Astrocyte of the cerebellum (primary cell): ENCODE measurements at regions of chrX and their contacts with region 1.

Region 1: DNA sequence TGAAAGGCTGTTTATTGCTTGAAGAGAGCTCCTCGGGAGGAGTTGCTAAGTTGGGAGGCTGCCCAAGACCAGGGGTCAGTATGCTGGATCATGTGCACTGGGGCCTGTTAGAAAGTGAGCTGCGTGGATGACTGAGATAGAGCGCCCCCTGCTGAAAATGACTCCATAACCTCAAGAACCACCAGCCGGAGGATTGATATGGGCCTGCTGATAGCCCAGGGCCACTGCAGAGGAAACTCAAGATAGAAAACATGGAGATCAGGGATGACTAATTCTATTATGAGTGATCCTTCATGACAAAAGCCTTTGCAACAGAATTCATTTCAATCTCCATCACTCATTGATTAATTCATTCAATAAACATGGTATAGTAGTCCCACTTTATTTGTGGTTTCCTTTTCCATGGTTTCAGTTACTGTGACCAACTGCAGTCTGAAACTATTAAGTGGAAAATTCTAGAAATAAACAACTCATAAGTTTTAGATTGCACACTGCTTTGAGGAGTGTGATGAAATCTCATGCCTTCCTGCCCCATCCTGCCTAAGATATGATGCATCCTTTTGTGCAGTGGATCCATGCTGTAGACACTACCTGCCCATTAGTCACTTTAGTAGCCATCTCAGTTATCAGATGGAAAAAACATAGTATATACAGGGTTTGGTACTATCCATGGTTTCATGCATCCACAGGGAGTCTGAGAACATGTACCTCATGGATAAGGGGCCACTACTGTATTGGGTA is 126.7 kb upstream of the MBNL3 start:
- DNase-seq: no peak
- H3K4me3 ChIP-seq: no peak overlapping the region
- CTCF ChIP-seq: peak; percentile 38

Region 2: DNA sequence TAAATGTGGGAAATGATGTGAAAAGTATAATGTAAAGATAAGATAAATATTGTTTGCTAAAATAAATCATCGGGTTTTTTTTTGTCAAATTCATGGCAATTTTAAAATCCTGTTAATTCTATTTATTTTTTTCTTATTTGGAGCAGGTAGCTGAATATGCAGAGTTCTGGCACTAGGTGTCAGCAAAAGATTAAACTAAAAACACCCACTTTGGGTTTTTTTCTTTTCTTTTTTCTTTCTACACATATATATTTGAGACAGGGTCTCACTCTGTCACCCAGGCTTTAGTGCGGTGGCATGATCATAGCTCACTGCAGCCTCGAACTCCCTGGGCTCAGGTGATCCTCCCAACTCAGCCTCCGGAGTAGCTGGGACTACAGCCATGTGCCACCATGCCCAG is 389.4 kb before region 1 on chrX:
- in situ Hi-C with region 1: loop called (anchors 25 kb)
- DNase-seq: no peak
- H3K4me3 ChIP-seq: no peak overlapping the region
- CTCF ChIP-seq: peak; percentile 28